ENCODE measurements at regions of chr7 and their contacts with region 1.

Region 1: DNA sequence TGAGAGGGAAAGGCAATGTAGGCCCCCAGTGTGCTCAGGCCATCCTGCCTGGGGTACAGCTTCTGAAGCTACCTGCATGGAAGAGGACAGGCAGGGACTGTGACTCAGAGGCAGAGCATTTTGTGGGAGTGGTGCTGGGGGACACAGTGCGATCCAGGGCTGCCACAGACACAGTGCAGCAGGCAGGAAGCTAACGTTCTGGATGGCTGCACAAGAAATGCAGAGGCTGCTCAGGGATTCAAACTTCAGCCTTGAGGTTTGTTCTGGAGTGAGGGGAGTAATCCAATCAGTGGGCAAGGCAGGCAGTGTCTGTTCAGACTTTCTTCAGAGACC is 648.0 kb upstream of the IGFBP3 start:
- DNase-seq: peak; percentile 86
- H3K4me3 Mint-ChIP-seq: peak overlapping the region; percentile 56
- H3K27ac Mint-ChIP-seq: peak overlapping the region; percentile 75
- H3K4me1 Mint-ChIP-seq: peaks cover 94% of the 10 kb centered on the region
- H3K27me3 Mint-ChIP-seq: no peaks in the 10 kb centered on the region
- CTCF ChIP-seq: no peak

Region 2: DNA sequence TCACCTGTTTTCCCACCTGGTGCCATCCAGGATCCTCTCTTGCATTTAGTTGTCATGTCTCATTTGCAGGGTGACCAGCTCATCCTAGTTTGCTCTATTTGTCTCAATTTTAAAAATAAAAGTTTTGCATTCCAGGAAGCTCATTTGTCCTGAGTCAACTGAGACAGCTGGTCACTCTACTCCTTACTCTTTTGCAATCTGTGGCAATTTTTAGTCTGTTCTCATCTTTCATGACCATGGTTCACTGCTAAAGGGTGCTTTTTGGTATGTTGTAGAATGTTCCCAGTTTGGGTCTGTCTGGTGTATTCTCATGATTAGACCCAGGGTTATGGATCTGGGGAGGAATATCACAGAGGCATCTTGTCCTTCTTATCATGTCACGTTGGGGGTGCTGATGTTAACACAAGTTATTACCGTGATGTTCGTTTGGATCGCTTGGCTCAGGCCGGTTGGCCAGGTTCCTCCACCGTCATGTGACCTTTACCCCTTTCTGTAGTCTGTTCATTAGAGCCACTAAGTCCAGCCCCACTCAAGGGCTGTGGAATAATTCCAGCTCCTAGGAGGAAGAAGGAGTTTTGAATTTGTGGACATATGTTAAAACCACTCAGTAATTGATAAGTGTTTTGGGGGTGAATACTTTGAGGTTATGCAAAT is 544.7 kb before region 1 on chr7:
- CTCF ChIA-PET with region 1: no interaction called
- intact Hi-C with region 1: no loop called
- DNase-seq: no peak
- H3K4me3 Mint-ChIP-seq: no peak overlapping the region
- H3K27ac Mint-ChIP-seq: no peak overlapping the region
- H3K4me1 Mint-ChIP-seq: peaks cover 8% of the 10 kb centered on the region
- H3K27me3 Mint-ChIP-seq: no peaks in the 10 kb centered on the region
- CTCF ChIP-seq: no peak

Region 3: GRCh38 chr7:46385662-46386309 is 183.3 kb before region 1 on chr7:
- CTCF ChIA-PET with region 1: no interaction called
- intact Hi-C with region 1: loop called (anchors 10 kb)
- DNase-seq: no peak
- H3K4me3 Mint-ChIP-seq: no peak overlapping the region
- H3K27ac Mint-ChIP-seq: peak overlapping the region; percentile 65
- H3K4me1 Mint-ChIP-seq: peaks cover 28% of the 10 kb centered on the region
- H3K27me3 Mint-ChIP-seq: no peaks in the 10 kb centered on the region
- CTCF ChIP-seq: no peak

Region 4: DNA sequence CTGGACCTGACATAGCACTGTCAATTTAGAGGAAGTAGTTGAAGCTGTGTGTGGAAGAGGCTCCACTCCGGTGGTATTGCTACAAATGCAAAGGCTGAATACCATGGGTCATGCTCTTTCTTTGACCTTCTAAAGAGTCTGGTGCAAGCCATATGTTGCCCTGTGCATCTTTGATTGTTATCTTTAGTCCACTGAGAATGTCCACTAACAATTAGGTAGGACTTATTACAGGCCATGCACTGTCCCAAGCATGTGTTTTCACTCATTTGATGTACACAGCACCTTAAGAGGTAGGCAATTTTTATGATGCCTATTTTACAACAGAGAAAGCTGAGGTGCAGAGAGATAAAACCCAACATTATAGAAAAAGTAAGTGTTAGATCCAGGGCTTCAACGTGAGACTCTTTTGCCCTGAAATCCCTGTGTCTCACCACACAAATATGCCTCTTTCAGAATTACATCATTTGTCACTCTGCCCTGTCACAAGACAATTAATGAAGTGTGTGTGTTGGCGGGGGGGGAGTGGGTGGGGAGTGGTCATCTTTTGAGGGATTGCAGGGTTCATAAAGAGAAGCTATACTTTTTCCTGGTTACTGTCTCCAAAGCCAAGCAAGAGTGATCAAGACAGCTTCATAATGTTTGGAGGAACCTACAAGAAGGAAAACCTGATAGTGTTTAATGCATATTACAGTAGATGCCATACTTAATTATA is 10.5 kb before region 1 on chr7:
- CTCF ChIA-PET with region 1: interaction called, 12 read pairs
- intact Hi-C with region 1: no loop called
- DNase-seq: no peak
- H3K4me3 Mint-ChIP-seq: no peak overlapping the region
- H3K27ac Mint-ChIP-seq: peak overlapping the region; percentile 96
- H3K4me1 Mint-ChIP-seq: peaks cover 62% of the 10 kb centered on the region
- H3K27me3 Mint-ChIP-seq: no peaks in the 10 kb centered on the region
- CTCF ChIP-seq: no peak

Region 5: DNA sequence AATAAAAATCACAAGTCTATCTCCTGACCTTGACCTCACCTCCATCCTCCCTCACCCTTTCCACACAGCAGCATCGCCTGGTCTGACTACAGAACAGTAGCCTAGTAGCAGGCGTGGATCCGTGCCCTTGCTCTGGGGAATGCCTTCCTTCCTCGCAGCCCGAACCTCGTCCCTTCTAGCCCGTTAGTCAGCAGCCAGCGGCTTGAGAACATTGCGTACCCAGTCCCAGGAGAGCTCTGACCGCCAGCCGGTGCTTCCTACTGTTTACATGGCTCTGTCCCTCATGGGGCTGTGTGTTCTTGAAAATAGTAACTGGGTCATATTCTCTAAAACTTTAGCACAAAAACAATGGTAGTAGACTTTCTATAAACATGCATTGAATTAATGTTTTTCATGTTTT is 34.7 kb after region 1 on chr7:
- CTCF ChIA-PET with region 1: no interaction called
- intact Hi-C with region 1: no loop called
- DNase-seq: no peak
- H3K4me3 Mint-ChIP-seq: no peak overlapping the region
- H3K27ac Mint-ChIP-seq: no peak overlapping the region
- H3K4me1 Mint-ChIP-seq: peaks cover 21% of the 10 kb centered on the region
- H3K27me3 Mint-ChIP-seq: no peaks in the 10 kb centered on the region
- CTCF ChIP-seq: no peak

Region 6: DNA sequence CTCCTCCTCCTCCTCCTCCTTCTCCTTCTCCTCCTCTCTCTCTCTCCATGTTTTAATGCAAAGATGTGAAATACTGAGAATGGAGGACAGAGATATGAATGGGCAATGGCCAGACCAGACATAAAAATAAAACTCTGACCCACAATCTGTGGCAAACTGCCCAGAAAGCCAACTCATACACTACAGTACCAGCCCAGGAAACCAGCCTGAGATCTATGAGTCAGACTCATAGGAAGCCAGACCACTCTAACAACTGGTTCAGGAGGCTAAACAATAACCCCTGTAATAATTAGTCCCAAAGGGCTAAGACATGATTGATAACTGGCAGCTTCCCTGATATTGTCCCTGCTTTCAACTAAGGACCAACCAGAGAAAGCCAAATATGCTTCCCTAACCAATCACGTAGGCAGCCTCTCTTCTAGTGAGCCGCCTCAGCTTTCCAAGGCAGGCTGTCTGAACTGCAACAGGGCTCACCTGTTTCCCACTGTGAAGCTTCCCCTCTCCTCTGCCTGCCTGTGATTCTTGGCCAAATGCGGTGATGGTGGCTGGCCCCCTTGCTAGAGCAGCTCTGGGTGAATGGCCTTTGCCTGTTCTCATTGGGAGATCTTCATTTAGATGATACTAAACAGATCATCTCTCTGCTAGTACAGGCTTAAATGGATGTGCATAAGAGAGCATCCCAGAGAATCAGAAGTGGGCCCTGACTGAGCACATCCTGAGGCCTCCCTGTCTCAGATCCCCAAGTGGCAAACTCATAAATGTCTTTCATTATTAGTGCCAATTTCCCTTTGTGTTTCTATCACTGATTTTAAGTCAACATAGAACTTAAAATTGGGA is 195.2 kb after region 1 on chr7:
- CTCF ChIA-PET with region 1: no interaction called
- intact Hi-C with region 1: loop called (anchors 5 kb)
- DNase-seq: peak; percentile 90
- H3K4me3 Mint-ChIP-seq: peak overlapping the region; percentile 4
- H3K27ac Mint-ChIP-seq: peak overlapping the region; percentile 80
- H3K4me1 Mint-ChIP-seq: peaks cover 30% of the 10 kb centered on the region
- H3K27me3 Mint-ChIP-seq: no peaks in the 10 kb centered on the region
- CTCF ChIP-seq: no peak

Region 7: GRCh38 chr7:46972205-46972604 is 403.1 kb after region 1 on chr7:
- CTCF ChIA-PET with region 1: no interaction called
- intact Hi-C with region 1: loop called (anchors 1 kb)
- DNase-seq: peak; percentile 25
- H3K4me3 Mint-ChIP-seq: no peak overlapping the region
- H3K27ac Mint-ChIP-seq: peak overlapping the region; percentile 100
- H3K4me1 Mint-ChIP-seq: peaks cover 54% of the 10 kb centered on the region
- H3K27me3 Mint-ChIP-seq: no peaks in the 10 kb centered on the region
- CTCF ChIP-seq: no peak